Activated CD8-positive, alpha-beta T cell treated with anti-CD3 and anti-CD28 coated beads, Interleukin-2, amount 10 ng/mL, durations not matched to agents 7 days and 5 days (primary cell): ENCODE measurements at regions of chr6 and their contacts with region 1.

Region 1: GRCh38 chr6:32127717-32128592 is at the start of gene ATF6B:
- DNase-seq: peak; percentile 99
- ATAC-seq: peak; percentile 95
- H3K4me3 Mint-ChIP-seq: peak within 1 kb of the TSS; percentile 99
- H3K27ac Mint-ChIP-seq: peak within 1 kb of the TSS; percentile 98
- H3K4me1 Mint-ChIP-seq: peaks cover 46% of the 10 kb centered on the region
- H3K27me3 Mint-ChIP-seq: no peaks in the 10 kb centered on the region
- total RNA-seq, gene ATF6B: 107 to 117 TPM

Region 2: DNA sequence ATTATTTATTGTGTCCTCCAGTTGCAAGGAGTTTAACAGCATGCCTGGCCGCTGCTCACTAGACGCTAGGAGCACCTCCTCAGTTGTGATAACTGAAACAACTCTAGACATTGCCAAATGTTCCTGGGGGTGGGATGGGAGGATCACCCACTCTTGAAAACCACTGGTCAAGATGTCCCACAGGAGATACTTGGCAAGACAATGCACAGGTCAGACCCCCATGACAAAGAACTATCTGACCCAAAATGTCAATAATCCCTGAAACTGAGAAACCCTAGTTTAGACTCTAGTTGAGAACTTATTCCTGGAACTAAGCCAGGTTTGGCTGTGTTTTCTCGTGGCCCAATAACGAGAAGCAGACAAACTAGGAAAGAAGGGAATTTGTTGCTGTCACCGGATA is 11.6 kb after region 1 on chr6:
- CTCF ChIA-PET with region 1: interaction called, 10 read pairs
- POLR2A ChIA-PET with region 1: no interaction called
- DNase-seq: no peak
- ATAC-seq: no peak
- H3K4me3 Mint-ChIP-seq: no peak overlapping the region
- H3K27ac Mint-ChIP-seq: no peak overlapping the region
- H3K4me1 Mint-ChIP-seq: no peaks in the 10 kb centered on the region
- H3K27me3 Mint-ChIP-seq: peaks cover 12% of the 10 kb centered on the region

Region 3: GRCh38 chr6:32190054-32190851 is 62.3 kb after region 1 on chr6 and contains the start of gene PBX2:
- CTCF ChIA-PET with region 1: interaction called, 28 read pairs
- POLR2A ChIA-PET with region 1: interaction called, 35 read pairs
- DNase-seq: peak; percentile 93
- ATAC-seq: peak; percentile 61
- H3K4me3 Mint-ChIP-seq: peak within 1 kb of the TSS; percentile 99
- H3K27ac Mint-ChIP-seq: peak within 1 kb of the TSS; percentile 97
- H3K4me1 Mint-ChIP-seq: peaks cover 59% of the 10 kb centered on the region
- H3K27me3 Mint-ChIP-seq: no peaks in the 10 kb centered on the region
- total RNA-seq, gene PBX2: 60.5 to 68.5 TPM

Region 4: GRCh38 chr6:32195652-32195901 is 67.6 kb after region 1 on chr6:
- CTCF ChIA-PET with region 1: interaction called, 28 read pairs
- POLR2A ChIA-PET with region 1: interaction called, 35 read pairs
- DNase-seq: peak; percentile 100
- ATAC-seq: peak; percentile 90
- H3K4me3 Mint-ChIP-seq: peak overlapping the region; percentile 97
- H3K27ac Mint-ChIP-seq: peak overlapping the region; percentile 99
- H3K4me1 Mint-ChIP-seq: peaks cover 33% of the 10 kb centered on the region
- H3K27me3 Mint-ChIP-seq: no peaks in the 10 kb centered on the region